Endothelial cell of umbilical vein (primary cell): ENCODE measurements at regions of chr19 and their contacts with region 1.

Region 1: DNA sequence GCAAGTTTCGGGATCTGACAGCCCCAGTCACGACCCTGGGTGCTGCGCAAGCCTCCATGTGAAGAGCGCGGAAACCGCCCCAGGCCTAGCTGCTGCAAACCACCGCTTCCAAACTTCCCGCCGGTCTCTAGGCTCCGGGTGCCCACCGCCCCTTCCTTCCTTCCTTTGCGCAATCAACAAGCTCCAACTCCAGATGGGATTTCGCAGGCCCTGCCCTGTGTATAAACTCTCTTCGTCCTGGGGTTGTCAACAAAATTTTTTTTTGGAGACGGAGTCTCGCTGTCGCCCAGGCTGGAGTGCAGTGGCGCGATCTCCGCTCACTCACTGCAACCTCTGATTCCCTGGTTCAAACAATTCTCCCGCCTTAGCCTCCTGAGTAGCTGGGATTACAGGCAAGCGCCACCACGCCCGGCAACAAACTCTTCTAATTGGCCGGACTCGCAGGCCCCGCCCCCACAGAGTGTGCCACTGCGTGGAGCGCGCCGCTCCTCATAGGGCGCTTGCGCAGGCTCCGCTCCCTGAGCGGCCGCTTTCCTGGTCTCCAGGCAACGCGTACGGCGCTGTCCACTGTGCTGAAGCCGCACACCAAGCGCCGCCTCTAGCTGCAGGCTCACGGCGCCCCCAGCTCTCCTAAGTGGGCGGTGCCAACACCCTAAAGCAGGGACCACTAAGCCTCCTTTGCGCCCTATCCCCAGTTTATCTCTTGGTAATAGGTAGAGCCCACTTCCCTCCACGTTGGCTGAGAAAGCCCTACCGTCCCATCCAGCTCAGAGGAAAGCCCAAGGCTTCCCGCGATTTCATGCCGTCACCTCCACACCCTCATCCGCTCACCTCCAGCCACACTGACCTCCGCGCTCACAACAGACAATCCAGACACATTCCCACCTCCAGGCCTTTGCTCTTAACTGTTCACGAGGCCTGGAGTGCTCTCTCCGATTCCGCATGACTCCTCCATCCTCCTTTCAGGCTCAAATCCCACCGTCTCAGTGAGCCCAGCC is 5.5 kb upstream of the QTRT1 start:
- DNase-seq: peak; percentile 98
- H3K4me3 ChIP-seq: peak overlapping the region; percentile 13 to 45 (median 20)
- H3K27ac ChIP-seq: no peak overlapping the region
- H3K4me1 ChIP-seq: peaks cover 7% of the 10 kb centered on the region
- H3K27me3 ChIP-seq: no peaks in the 10 kb centered on the region
- CTCF ChIP-seq: no peak
- POLR2A ChIP-seq: no peak

Region 2: GRCh38 chr19:10471909-10472308 is 223.8 kb before region 1 on chr19:
- CTCF ChIA-PET with region 1: interaction called, 19 read pairs
- POLR2A ChIA-PET with region 1: interaction called, 8 read pairs
- dilution Hi-C with region 1: no loop called
- intact Hi-C with region 1: loop called (anchors 10 kb)
- DNase-seq: peak; percentile 26
- H3K4me3 ChIP-seq: no peak overlapping the region
- H3K27ac ChIP-seq: no peak overlapping the region
- H3K4me1 ChIP-seq: no peaks in the 10 kb centered on the region
- H3K27me3 ChIP-seq: no peaks in the 10 kb centered on the region
- CTCF ChIP-seq: peak in 1 of 2 donors; percentile 40
- POLR2A ChIP-seq: no peak

Region 3: GRCh38 chr19:10502524-10503001 is 193.1 kb before region 1 on chr19:
- CTCF ChIA-PET with region 1: interaction called, 23 read pairs
- POLR2A ChIA-PET with region 1: no interaction called
- dilution Hi-C with region 1: no loop called
- intact Hi-C with region 1: no loop called
- DNase-seq: peak; percentile 85
- H3K4me3 ChIP-seq: peak overlapping the region; percentile 33 to 89 (median 75)
- H3K27ac ChIP-seq: peak overlapping the region; percentile 94
- H3K4me1 ChIP-seq: peaks cover 7% of the 10 kb centered on the region
- H3K27me3 ChIP-seq: no peaks in the 10 kb centered on the region
- CTCF ChIP-seq: no peak
- POLR2A ChIP-seq: peak; percentile 91

Region 4: GRCh38 chr19:10523135-10523636 is 172.5 kb before region 1 on chr19:
- CTCF ChIA-PET with region 1: interaction called, 12 read pairs
- POLR2A ChIA-PET with region 1: no interaction called
- dilution Hi-C with region 1: no loop called
- intact Hi-C with region 1: no loop called
- DNase-seq: no peak
- H3K4me3 ChIP-seq: no peak overlapping the region
- H3K27ac ChIP-seq: no peak overlapping the region
- H3K4me1 ChIP-seq: no peaks in the 10 kb centered on the region
- H3K27me3 ChIP-seq: peaks cover 16 to 20% of the 10 kb centered on the region in 2 experiments
- CTCF ChIP-seq: no peak
- POLR2A ChIP-seq: no peak

Region 5: DNA sequence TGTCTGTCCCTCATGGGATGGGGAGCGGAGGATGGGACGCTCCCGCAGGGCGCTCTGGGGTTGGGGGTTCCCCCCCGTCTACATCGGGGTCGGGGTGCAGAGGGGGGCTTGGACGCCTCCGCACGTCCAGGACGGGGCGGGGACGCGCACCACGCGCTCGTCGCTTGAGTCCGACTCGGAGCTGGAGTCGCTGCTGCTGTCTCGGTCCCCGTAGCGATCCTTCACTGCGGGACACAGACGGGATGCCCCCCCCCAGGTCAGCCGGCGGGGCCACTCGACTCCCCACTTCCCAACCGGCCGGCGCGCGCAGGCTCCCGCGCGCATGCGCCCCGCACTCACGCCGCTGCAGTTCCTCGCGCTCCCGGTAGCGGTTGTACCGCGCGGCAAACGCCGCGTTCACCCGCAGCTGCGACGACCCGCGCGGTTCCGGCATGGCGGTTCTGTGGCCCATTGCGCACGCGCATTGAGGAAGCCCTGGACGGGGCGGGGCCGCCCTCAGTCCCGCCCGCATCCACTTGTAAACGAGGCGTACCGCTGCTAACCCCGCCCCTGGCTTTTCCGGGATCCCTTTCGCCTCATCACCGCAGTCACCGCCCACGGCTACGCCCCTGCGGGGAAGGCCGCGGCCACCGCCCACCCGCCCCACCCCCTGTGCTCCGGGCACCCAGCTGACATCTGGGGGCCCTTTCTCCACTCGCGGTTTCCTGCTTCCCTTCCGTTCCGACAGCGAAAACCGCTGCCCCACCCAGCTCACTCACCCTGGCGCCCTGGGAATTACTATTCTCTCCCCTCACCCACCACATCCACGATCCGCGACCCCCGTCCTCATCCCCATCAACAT is 129.9 kb before region 1 on chr19 and contains the start of gene KRI1:
- CTCF ChIA-PET with region 1: interaction called, 13 read pairs
- POLR2A ChIA-PET with region 1: no interaction called
- dilution Hi-C with region 1: no loop called
- intact Hi-C with region 1: loop called (anchors 2 kb)
- DNase-seq: peak; percentile 98
- H3K4me3 ChIP-seq: peak within 1 kb of the TSS; percentile 75 to 99 (median 78)
- H3K27ac ChIP-seq: peak within 1 kb of the TSS; percentile 64
- H3K4me1 ChIP-seq: peaks cover 27% of the 10 kb centered on the region
- H3K27me3 ChIP-seq: no peaks in the 10 kb centered on the region
- CTCF ChIP-seq: peak; percentile 10 to 55
- POLR2A ChIP-seq: peak; percentile 92
- total RNA-seq, gene KRI1: 23.1 and 25.7 TPM in 2 replicates

Region 6: GRCh38 chr19:10644260-10645007 is 51.3 kb before region 1 on chr19:
- CTCF ChIA-PET with region 1: interaction called, 30 read pairs
- POLR2A ChIA-PET with region 1: no interaction called
- dilution Hi-C with region 1: no loop called
- intact Hi-C with region 1: no loop called
- DNase-seq: peak; percentile 80
- H3K4me3 ChIP-seq: no peak overlapping the region
- H3K27ac ChIP-seq: no peak overlapping the region
- H3K4me1 ChIP-seq: peaks cover 4% of the 10 kb centered on the region
- H3K27me3 ChIP-seq: no peaks in the 10 kb centered on the region
- CTCF ChIP-seq: peak; percentile 83 to 92
- POLR2A ChIP-seq: no peak

Region 7: DNA sequence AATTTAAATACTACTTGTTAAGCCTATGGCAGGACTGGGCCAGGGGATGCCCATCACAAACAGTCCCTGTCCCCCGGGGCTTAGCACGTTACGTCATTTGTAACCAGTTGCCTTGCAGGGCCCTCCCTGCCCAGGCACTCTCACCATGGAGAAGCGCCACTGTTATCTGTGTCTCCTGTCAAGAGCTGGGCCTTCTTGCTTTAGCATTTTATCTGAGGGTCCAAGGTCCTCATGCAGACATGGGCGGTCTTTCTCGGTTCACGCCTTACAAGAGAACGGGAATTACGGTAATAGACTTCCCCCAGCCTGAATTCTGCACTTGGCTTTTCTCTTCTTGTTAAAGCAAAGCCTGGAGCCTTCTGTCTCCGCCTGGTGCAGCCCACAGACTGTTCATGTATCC is 94.2 kb after region 1 on chr19:
- CTCF ChIA-PET with region 1: no interaction called
- POLR2A ChIA-PET with region 1: no interaction called
- dilution Hi-C with region 1: no loop called
- intact Hi-C with region 1: no loop called
- DNase-seq: no peak
- H3K4me3 ChIP-seq: no peak overlapping the region
- H3K27ac ChIP-seq: no peak overlapping the region
- H3K4me1 ChIP-seq: no peaks in the 10 kb centered on the region
- H3K27me3 ChIP-seq: no peaks in the 10 kb centered on the region
- CTCF ChIP-seq: no peak
- POLR2A ChIP-seq: no peak